ENCODE measurements at regions of chr4 and their contacts with region 1.

Region 1: GRCh38 chr4:48546336-48546735 is 56.3 kb downstream of the ZAR1 start:
- DNase-seq: peak; percentile 20
- H3K4me3 Mint-ChIP-seq: no peak overlapping the region
- H3K27ac Mint-ChIP-seq: no peak overlapping the region
- H3K4me1 Mint-ChIP-seq: no peaks in the 10 kb centered on the region
- H3K27me3 Mint-ChIP-seq: no peaks in the 10 kb centered on the region
- CTCF ChIP-seq: peak; percentile 39

Region 2: GRCh38 chr4:48315728-48316630 is 230.4 kb before region 1 on chr4:
- CTCF ChIA-PET with region 1: no interaction called
- intact Hi-C with region 1: loop called (anchors 5 kb)
- DNase-seq: peak; percentile 11
- H3K4me3 Mint-ChIP-seq: no peak overlapping the region
- H3K27ac Mint-ChIP-seq: no peak overlapping the region
- H3K4me1 Mint-ChIP-seq: peaks cover 9% of the 10 kb centered on the region
- H3K27me3 Mint-ChIP-seq: no peaks in the 10 kb centered on the region
- CTCF ChIP-seq: peak; percentile 44

Region 3: GRCh38 chr4:48445704-48446103 is 100.6 kb before region 1 on chr4:
- CTCF ChIA-PET with region 1: no interaction called
- intact Hi-C with region 1: loop called (anchors 5 kb)
- DNase-seq: no peak
- H3K4me3 Mint-ChIP-seq: no peak overlapping the region
- H3K27ac Mint-ChIP-seq: no peak overlapping the region
- H3K4me1 Mint-ChIP-seq: no peaks in the 10 kb centered on the region
- H3K27me3 Mint-ChIP-seq: no peaks in the 10 kb centered on the region
- CTCF ChIP-seq: no peak

Region 4: DNA sequence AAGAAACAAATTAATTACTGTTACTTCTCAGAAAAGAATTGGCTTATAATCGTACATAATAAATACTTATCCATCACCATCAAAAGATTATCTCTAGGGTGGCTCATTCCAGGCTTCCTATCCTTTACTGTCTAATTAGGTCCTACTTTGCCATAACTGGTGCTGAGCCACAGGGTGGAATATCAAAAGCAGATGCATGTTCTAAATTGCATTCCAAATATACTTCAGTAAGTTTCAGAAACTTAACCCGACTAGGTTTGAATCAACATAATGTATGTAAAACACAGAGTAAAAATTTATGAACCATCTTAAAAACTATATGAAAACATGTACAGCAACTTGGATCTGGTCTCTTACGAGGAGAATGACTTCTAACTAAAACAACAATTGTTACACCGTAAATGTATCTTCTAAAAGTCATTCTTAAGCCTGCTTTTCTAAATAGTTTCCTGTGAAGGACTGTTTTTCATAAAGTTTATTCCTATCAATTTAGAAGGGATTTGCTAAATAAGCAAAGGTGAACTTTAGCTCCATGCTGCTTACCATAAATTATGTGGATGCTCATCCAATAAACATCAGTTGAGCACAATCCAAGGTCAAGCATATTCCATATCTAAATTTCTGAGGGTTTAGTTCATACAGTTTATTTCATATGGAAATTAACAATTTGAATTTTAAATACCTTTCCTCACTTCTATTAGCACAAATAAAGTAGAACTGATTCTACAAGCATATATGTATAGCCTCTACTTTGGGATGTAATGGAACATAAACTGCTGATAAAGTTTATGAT is 42.9 kb before region 1 on chr4:
- CTCF ChIA-PET with region 1: no interaction called
- intact Hi-C with region 1: loop called (anchors 2 kb)
- DNase-seq: no peak
- H3K4me3 Mint-ChIP-seq: no peak overlapping the region
- H3K27ac Mint-ChIP-seq: no peak overlapping the region
- H3K4me1 Mint-ChIP-seq: no peaks in the 10 kb centered on the region
- H3K27me3 Mint-ChIP-seq: no peaks in the 10 kb centered on the region
- CTCF ChIP-seq: no peak

Region 5: GRCh38 chr4:49217492-49217891 is 671.2 kb after region 1 on chr4:
- CTCF ChIA-PET with region 1: no interaction called
- intact Hi-C with region 1: no loop called
- DNase-seq: no peak
- H3K4me3 Mint-ChIP-seq: no peak overlapping the region
- H3K27ac Mint-ChIP-seq: no peak overlapping the region
- H3K4me1 Mint-ChIP-seq: no peaks in the 10 kb centered on the region
- H3K27me3 Mint-ChIP-seq: peaks cover 9% of the 10 kb centered on the region
- CTCF ChIP-seq: no peak